ENCODE measurements at regions of chr9 and their contacts with region 1.

Region 1: GRCh38 chr9:137277329-137278041 is at the start of gene TOR4A:
- DNase-seq: peak; percentile 89 to 92
- ATAC-seq: peak; percentile 79 to 89
- H3K4me3 ChIP-seq: peak within 1 kb of the TSS; percentile 72
- H3K27ac ChIP-seq: peak within 1 kb of the TSS; percentile 94 to 96
- H3K4me1 ChIP-seq: peaks cover 35% of the 10 kb centered on the region
- CTCF ChIP-seq: peak; percentile 33; the same call in 1 of the 3 replicates
- EP300 ChIP-seq: peak in 1 of 2 experiments; percentile 15; a peak in 1 of 5 replicates
- POLR2A ChIP-seq: peak; percentile 56
- RAD21 ChIP-seq: peak in 1 of 2 experiments; percentile 29; a peak in 3 of 5 replicates
- polyA plus RNA-seq, gene TOR4A: 8.7 and 9.8 TPM in 2 replicates

Region 2: DNA sequence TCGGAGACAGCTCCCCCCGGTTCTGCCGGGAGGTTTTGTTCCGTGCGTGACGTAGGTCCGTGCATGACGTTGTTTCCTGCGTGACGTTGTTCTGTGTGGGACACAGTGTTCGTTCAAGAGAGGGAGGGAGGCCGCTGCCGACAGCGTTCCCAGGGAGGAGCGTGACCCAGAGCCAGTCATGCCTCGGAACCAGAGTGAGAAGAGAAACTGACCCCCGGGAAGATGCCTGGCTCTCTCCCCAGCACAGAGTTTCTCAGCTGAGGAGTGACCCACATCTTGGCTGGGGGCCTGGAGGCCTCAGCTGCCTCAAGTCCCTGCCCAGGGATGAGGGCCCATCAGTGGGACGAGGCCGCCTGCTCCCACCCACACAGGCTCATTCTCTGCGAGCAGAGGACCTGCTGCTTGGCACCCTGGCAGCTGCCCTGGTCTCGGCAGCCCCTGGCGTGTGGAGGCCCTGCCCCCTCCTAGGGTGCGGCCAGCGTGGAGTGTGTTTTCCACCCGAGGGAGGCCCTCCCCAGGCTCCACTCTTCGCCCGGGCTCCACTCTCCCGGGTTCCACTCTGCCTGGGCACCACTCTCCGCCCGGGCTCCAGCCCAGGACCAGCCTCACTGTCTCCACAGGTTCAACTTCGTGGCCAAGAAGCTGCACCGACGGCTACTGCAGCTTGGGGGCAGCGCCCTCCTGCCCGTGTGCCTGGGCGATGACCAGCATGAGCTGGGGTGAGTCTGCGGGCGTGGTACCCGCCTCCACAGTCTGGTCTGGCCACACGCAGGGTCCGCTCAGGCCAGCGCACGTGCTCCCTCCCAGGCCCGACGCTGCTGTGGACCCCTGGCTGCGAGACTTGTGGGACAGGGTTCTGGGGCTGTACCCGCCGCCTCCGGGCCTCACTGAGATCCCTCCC is 64.1 kb before region 1 on chr9:
- CTCF ChIA-PET with region 1: no interaction called
- POLR2A ChIA-PET with region 1: no interaction called
- DNase-seq: no peak
- ATAC-seq: peak in 1 of 2 experiments; percentile 35; a peak in 3 of 6 replicates
- H3K4me3 ChIP-seq: no peak overlapping the region
- H3K27ac ChIP-seq: no peak overlapping the region
- H3K4me1 ChIP-seq: peaks cover 16% of the 10 kb centered on the region
- CTCF ChIP-seq: peak; percentile 11; the same call in 1 of the 3 replicates
- EP300 ChIP-seq: no peak
- POLR2A ChIP-seq: no peak
- RAD21 ChIP-seq: peak in 1 of 2 experiments; percentile 31; a peak in 1 of 5 replicates

Region 3: GRCh38 chr9:137262909-137263285 is 14.6 kb before region 1 on chr9:
- CTCF ChIA-PET with region 1: interaction called, 43 read pairs
- POLR2A ChIA-PET with region 1: no interaction called
- DNase-seq: no peak
- ATAC-seq: peak in 1 of 2 experiments; percentile 15; a peak in 3 of 6 replicates
- H3K4me3 ChIP-seq: no peak overlapping the region
- H3K27ac ChIP-seq: no peak overlapping the region
- H3K4me1 ChIP-seq: peaks cover 4% of the 10 kb centered on the region; the same call in 2 of the 3 replicates
- CTCF ChIP-seq: no peak
- EP300 ChIP-seq: no peak
- POLR2A ChIP-seq: no peak
- RAD21 ChIP-seq: no peak

Region 4: GRCh38 chr9:137295238-137295811 is 17.8 kb after region 1 on chr9:
- CTCF ChIA-PET with region 1: interaction called, 5 read pairs
- POLR2A ChIA-PET with region 1: interaction called, 12 read pairs
- DNase-seq: peak in 1 of 2 experiments; percentile 84
- ATAC-seq: peak; percentile 71 to 79
- H3K4me3 ChIP-seq: peak overlapping the region; percentile 88
- H3K27ac ChIP-seq: peak overlapping the region; percentile 85 to 93
- H3K4me1 ChIP-seq: peaks cover 26% of the 10 kb centered on the region
- CTCF ChIP-seq: peak; percentile 91
- EP300 ChIP-seq: no peak
- POLR2A ChIP-seq: no peak
- RAD21 ChIP-seq: peak; percentile 42 to 66

Region 5: DNA sequence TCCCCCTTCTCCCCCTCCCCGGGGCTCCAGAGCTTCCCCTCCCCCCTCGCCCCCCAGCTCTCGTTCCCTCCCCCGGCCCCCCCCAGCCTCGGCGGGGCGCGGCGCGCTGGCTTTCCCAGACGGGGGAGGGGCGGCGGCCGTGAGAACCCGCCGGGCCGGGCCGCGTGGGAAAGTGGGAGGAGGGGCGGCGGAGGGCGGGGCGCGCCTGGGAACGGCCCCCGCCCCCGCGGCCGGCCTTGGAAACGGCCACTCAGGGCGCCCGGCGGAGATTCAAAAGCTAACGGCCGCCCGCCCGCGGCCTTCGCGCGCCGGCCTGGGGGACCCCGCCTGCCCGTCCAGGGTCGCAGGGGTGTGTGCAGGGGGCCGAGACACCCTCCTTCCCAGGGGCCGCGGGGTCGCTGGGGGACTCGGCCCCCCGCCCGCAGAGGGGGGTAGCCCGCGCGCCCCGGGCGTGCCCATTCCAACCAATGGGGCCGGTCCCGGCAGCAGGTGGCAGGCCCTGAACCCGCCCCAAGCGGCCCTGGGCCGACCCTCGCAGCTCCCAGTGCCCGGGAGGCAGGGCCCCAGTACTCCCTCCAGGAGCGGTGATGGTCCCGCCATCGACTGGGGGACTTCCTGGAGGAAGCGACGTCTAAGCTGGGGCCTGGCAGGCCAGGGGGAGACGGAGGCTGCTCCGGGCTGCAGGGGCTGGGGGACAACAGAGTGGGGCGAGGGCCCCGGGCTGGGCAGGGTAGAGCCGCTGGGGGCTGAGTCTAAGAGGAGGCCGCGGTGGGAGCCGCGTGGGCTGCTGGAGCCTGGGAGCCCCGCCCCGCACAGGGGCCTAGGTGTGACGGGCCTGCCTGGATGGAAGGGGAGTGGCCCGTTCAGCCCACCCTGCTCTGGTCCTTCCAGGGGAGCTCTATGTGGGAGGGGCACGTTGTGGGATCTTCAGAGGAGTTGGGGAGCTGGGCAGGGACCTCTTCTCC is 38.8 kb after region 1 on chr9:
- CTCF ChIA-PET with region 1: no interaction called
- POLR2A ChIA-PET with region 1: no interaction called
- DNase-seq: peak; percentile 75 to 76
- ATAC-seq: peak; percentile 22 to 50; a peak in 4 of 6 replicates
- H3K4me3 ChIP-seq: peak overlapping the region; percentile 45
- H3K27ac ChIP-seq: peak overlapping the region; percentile 88 to 96
- H3K4me1 ChIP-seq: peaks cover 30% of the 10 kb centered on the region
- CTCF ChIP-seq: no peak
- EP300 ChIP-seq: no peak
- POLR2A ChIP-seq: no peak
- RAD21 ChIP-seq: no peak

Region 6: DNA sequence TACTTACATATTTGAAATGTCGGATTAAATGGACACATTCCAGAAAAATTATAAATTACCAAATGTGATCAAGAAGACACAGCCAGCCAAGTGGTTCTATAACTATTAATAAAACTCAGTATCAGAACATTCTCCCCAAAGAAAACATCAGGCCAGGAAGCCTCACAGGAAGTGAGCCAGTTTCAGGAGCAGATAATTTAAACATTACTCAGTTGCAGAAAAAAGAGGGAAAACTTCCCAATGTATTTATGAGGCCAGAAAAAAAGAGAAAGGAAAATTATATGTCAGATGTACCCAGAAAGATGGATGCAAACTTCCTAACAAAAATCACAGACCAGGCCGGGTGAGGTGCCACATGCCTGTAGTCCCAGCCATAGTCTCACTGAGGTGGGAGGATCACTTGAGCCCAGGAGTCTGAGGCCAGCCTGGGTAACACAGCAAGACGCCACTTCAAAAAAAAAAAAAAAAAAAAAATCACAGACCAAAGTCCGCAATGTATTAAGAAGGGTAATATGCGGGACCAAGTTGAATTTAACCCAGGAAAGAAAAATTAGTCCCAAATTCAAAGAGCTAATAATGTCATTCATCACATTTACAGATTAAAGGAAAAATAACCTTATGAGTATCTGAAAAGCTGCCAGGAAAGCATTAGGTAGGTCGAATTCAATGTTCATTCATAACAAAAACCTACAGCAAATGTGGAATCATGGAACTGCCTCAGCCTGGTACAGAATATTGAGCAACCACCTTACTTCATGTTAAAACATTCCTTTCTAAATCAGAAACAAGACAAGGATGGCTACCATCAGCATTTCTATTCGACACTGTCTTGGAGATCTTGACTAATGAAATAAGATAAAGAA is 61.8 kb after region 1 on chr9:
- CTCF ChIA-PET with region 1: no interaction called
- POLR2A ChIA-PET with region 1: no interaction called
- DNase-seq: no peak
- ATAC-seq: no peak
- H3K4me3 ChIP-seq: no peak overlapping the region
- H3K27ac ChIP-seq: no peak overlapping the region
- H3K4me1 ChIP-seq: no peaks in the 10 kb centered on the region
- CTCF ChIP-seq: no peak
- EP300 ChIP-seq: no peak
- POLR2A ChIP-seq: no peak
- RAD21 ChIP-seq: no peak